ENCODE measurements at regions of chrX and their contacts with region 1.

Region 1: GRCh38 chrX:73855546-73855945 is 292.5 kb downstream of the CHIC1 start:
- DNase-seq: peak; percentile 82
- H3K4me3 Mint-ChIP-seq: no peak overlapping the region
- H3K27ac Mint-ChIP-seq: no peak overlapping the region
- H3K4me1 Mint-ChIP-seq: no peaks in the 10 kb centered on the region
- H3K27me3 Mint-ChIP-seq: peaks cover 12% of the 10 kb centered on the region
- CTCF ChIP-seq: peak; percentile 64

Region 2: DNA sequence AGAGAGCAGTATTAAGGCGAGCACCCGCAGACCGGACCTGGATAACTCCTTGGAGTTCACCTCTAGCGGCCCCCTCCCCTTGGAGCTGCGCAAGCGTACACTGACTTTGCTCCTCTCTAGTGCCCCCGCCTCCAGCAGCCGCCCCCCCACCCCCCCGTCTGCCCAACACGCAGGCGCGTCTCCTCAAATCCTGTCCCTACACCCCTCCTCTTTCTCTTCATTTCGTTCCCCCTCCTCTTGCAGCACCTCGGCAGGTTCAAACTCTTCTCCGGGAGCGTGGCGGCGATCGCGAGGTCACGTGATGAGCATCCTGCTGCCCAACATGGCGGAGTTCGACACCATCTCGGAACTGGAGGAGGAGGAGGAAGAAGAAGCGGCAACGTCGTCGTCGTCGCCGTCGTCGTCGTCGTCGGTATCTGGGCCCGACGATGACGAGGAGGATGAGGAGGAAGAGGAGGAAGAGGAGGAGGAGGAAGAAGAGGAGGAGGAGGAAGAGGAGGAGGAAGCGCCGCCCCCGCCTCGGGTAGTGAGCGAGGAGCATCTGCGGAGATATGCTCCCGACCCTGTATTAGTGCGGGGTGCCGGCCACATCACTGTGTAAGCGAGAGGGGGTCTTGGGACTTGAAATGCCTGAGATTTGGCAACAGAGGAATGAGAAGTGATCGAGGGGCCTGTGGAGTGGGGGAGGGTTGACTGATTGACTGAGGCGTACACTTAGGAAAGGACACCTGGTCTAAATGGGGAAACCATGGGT is 292.4 kb before region 1 on chrX and contains the start of gene CHIC1:
- CTCF ChIA-PET with region 1: no interaction called
- POLR2A ChIA-PET with region 1: no interaction called
- intact Hi-C with region 1: no loop called
- DNase-seq: peak; percentile 56
- H3K4me3 Mint-ChIP-seq: peak within 1 kb of the TSS; percentile 83
- H3K27ac Mint-ChIP-seq: peak within 1 kb of the TSS; percentile 80
- H3K4me1 Mint-ChIP-seq: no peaks in the 10 kb centered on the region
- H3K27me3 Mint-ChIP-seq: peaks cover 25% of the 10 kb centered on the region
- CTCF ChIP-seq: no peak
- total RNA-seq, gene CHIC1: 7.4 and 8.0 TPM in 2 replicates

Region 3: DNA sequence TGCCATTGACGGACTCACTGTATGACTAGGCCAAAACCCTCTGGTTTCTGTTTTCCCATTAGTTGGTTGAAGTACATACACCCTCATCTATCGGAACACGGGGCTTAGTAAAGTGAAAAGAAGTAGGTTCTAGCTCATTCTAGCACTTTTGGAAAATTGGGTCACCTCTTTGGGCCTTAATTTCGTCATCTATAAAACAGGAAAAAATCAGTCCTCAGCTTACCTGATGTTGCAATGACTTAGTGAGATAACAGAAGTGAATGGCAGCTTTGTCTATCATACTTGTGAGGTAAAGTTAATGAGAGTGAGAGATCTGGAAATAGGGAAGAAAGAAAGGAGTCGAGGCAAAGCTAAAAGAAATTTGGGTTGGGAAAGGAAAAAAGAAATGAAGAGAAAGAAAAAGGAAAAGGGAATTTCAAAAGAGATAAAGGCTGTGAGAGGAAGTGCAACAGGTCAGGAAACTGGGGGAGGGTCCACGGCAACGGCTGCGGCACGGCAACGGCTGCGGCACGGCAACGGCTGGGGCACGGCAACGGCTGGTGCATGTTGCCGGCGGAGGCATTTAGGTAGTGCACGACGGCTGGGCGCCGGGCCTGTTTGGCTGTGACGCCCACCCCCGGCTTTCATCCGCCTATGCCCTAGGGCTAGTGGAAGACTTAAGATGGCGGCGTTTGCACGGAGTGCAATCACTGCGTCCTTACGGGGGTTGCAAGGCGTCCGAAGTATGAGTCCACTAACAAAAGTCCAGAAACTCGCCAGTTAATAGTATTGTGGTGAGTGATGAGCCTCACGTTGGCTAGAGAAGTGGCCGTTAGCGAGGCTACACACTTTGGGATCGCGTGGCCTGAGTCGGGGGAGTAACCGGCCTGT is 88.4 kb after region 1 on chrX:
- CTCF ChIA-PET with region 1: interaction called, 6 read pairs
- POLR2A ChIA-PET with region 1: interaction called, 9 read pairs
- intact Hi-C with region 1: loop called (anchors 1 kb)
- DNase-seq: peak; percentile 91
- H3K4me3 Mint-ChIP-seq: peak overlapping the region; percentile 76
- H3K27ac Mint-ChIP-seq: peak overlapping the region; percentile 82
- H3K4me1 Mint-ChIP-seq: peaks cover 15% of the 10 kb centered on the region
- H3K27me3 Mint-ChIP-seq: peaks cover 11% of the 10 kb centered on the region
- CTCF ChIP-seq: no peak

Region 4: GRCh38 chrX:74133156-74133796 is 277.7 kb after region 1 on chrX:
- CTCF ChIA-PET with region 1: interaction called, 56 read pairs
- POLR2A ChIA-PET with region 1: no interaction called
- intact Hi-C with region 1: loop called (anchors 1 kb)
- DNase-seq: peak; percentile 73
- H3K4me3 Mint-ChIP-seq: no peak overlapping the region
- H3K27ac Mint-ChIP-seq: no peak overlapping the region
- H3K4me1 Mint-ChIP-seq: peaks cover 5% of the 10 kb centered on the region
- H3K27me3 Mint-ChIP-seq: peaks cover 52% of the 10 kb centered on the region
- CTCF ChIP-seq: peak; percentile 68

Region 5: GRCh38 chrX:74458735-74459134 is 603.2 kb after region 1 on chrX:
- CTCF ChIA-PET with region 1: no interaction called
- POLR2A ChIA-PET with region 1: no interaction called
- intact Hi-C with region 1: loop called (anchors 1 kb)
- DNase-seq: peak; percentile 74
- H3K4me3 Mint-ChIP-seq: no peak overlapping the region
- H3K27ac Mint-ChIP-seq: no peak overlapping the region
- H3K4me1 Mint-ChIP-seq: peaks cover 6% of the 10 kb centered on the region
- H3K27me3 Mint-ChIP-seq: peaks cover 39% of the 10 kb centered on the region
- CTCF ChIP-seq: peak; percentile 19

Region 6: GRCh38 chrX:75603833-75604232 is 1748.3 kb after region 1 on chrX:
- CTCF ChIA-PET with region 1: no interaction called
- POLR2A ChIA-PET with region 1: no interaction called
- intact Hi-C with region 1: loop called (anchors 5 kb)
- DNase-seq: peak; percentile 41
- H3K4me3 Mint-ChIP-seq: no peak overlapping the region
- H3K27ac Mint-ChIP-seq: no peak overlapping the region
- H3K4me1 Mint-ChIP-seq: no peaks in the 10 kb centered on the region
- H3K27me3 Mint-ChIP-seq: peaks cover 10% of the 10 kb centered on the region
- CTCF ChIP-seq: peak; percentile 41